Psoas muscle (tissue), 8 donors: ENCODE measurements at regions of chr7 and their contacts with region 1.

Region 1: GRCh38 chr7:32942786-32943653 is 14.2 kb upstream of the FKBP9 start:
- DNase-seq: peak; percentile 84 to 90
- ATAC-seq: peak; percentile 95 to 97 (median 96)
- H3K4me3 ChIP-seq: peak overlapping the region; percentile 78
- H3K27ac ChIP-seq: peak overlapping the region; percentile 93
- H3K4me1 ChIP-seq: peaks cover 12% of the 10 kb centered on the region
- H3K27me3 ChIP-seq: no peaks in the 10 kb centered on the region
- CTCF ChIP-seq: peak; percentile 70

Region 2: DNA sequence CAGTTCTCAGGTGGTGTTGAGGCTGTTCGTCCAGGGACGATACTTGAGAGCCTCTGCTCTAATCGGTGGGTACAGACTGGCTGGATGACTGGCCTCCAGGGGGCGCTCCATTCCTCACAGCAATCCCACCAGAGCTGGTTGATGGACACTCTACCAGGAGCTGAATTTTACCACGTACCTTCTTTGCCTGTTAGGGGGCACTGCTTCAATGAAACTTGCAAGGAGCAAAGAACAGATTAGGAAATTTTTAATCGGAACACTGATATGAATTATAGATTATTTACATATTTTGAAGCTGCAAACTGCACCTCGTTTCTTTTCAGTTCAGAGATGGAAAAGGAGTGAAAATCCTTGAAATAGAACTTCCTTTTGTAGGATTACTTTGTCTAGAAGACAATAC is 96.3 kb before region 1 on chr7:
- intact Hi-C with region 1: loop called (anchors 2 to 5 kb)
- DNase-seq: peak; percentile 89 to 94
- ATAC-seq: peak; percentile 99 to 100 (median 100)
- H3K4me3 ChIP-seq: no peak overlapping the region
- H3K27ac ChIP-seq: no peak overlapping the region
- H3K4me1 ChIP-seq: no peaks in the 10 kb centered on the region
- H3K27me3 ChIP-seq: no peaks in the 10 kb centered on the region
- CTCF ChIP-seq: peak; percentile 95

Region 3: DNA sequence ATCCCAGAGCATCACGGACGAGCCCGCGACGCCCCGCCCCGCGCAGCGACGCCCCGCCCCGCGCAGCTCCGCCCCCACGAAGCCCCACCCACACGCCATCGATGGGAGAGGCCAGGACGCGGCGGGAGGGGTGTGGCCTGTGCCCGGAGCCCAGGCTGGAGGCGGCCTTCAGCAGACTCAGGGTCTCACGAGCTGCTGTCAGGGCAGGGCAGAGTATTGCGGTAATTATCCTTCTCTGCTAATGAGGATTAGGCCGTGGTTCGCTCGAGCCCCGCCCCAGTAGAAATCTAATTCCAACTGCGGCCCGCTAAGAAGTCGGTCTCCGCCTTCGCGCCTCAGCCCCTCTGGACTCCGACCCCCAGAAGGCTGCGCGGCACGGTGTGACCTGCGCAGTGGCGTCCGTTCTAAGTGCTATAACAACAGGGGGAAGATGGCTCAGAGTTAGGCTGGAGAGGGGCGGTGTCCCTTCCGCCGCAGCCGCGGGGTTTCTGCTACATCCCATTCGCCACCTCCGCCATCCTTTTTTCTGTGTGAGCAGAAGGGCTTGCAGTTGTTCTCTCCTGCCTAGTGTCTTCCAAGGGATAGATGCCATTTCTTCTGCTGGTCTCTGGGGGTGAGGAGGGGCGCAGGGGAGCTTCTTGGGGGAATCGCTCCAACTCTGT is 119.9 kb after region 1 on chr7:
- intact Hi-C with region 1: loop called in 1 of 2 experiments (anchors 5 kb)
- DNase-seq: peak; percentile 92 to 96
- ATAC-seq: peak; percentile 99
- H3K4me3 ChIP-seq: peak overlapping the region; percentile 96
- H3K27ac ChIP-seq: peak overlapping the region; percentile 96
- H3K4me1 ChIP-seq: peaks cover 16% of the 10 kb centered on the region
- H3K27me3 ChIP-seq: no peaks in the 10 kb centered on the region
- CTCF ChIP-seq: no peak